Activated B cell treated with CpG ODN at 0.5 μM for 24 hours (primary cell): ENCODE measurements at regions of chrX and their contacts with region 1.

Region 1: GRCh38 chrX:135973548-135974278 is at the start of gene MMGT1:
- DNase-seq: peak; percentile 72
- ATAC-seq: peak; percentile 93
- H3K4me3 Mint-ChIP-seq: peak within 1 kb of the TSS; percentile 99
- H3K27ac Mint-ChIP-seq: peak within 1 kb of the TSS; percentile 97
- H3K4me1 Mint-ChIP-seq: peaks cover 27% of the 10 kb centered on the region
- H3K27me3 Mint-ChIP-seq: no peaks in the 10 kb centered on the region
- CTCF ChIP-seq: no peak
- total RNA-seq, gene MMGT1: 20.3 and 21.4 TPM in 2 replicates

Region 2: DNA sequence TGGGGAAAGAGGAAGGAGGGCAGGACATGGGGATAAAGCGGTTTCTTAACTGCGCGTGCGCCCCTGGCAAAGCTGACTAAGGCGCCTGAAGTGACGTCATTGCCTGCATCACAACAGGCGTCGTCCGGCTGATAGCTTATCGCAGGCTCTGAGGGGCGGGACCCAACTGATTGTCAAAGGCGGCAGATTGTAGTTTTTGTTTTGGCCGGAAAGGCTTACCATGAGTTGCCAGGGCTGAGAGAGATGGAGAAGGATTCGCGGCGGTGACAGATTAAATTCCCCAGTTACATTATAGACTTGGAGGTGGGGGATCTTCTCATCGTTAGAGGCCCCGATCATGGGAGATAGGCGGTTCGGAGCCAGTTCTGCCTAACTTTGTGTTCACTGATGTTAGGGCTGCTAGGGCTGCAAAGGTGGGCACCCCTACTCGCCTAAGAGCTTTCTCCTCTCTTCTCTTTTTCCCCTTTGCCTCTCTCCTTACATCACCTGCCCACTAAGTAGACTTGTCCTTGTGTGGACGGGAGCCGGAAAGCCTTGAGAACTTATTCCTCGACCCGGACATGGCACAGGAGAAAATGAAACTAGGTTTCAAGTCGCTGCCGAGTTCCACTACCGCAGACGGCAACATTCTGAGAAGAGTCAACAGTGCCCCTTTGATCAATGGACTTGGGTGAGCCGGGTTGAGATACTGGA is 1166.5 kb before region 1 on chrX:
- CTCF ChIA-PET with region 1: no interaction called
- POLR2A ChIA-PET with region 1: interaction called, 3 read pairs
- intact Hi-C with region 1: loop called (anchors 10 kb)
- DNase-seq: peak; percentile 63
- ATAC-seq: peak; percentile 91
- H3K4me3 Mint-ChIP-seq: peak overlapping the region; percentile 95
- H3K27ac Mint-ChIP-seq: peak overlapping the region; percentile 95
- H3K4me1 Mint-ChIP-seq: peaks cover 23% of the 10 kb centered on the region
- H3K27me3 Mint-ChIP-seq: no peaks in the 10 kb centered on the region
- CTCF ChIP-seq: no peak

Region 3: DNA sequence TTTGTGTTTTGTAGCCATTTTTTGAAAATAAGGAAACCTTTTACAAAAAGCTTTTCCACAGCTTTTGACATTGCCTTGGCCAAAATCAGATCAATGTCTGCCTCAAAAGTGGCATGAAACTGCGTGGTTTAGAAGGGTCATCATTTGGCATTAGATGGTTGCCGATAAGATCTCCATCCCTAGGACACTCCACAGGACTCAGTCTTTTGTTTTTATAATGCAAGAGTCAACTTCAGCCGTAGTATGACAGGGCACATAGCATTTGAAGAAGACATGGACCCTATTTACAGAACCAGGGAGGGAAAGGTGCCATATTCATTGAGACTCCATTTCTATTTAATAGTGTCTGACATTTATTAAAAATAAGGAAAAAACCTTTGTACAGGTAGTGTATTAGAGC is 923.1 kb before region 1 on chrX:
- CTCF ChIA-PET with region 1: no interaction called
- POLR2A ChIA-PET with region 1: no interaction called
- intact Hi-C with region 1: loop called (anchors 5 kb)
- DNase-seq: no peak
- ATAC-seq: no peak
- H3K4me3 Mint-ChIP-seq: peak overlapping the region; percentile 88
- H3K27ac Mint-ChIP-seq: no peak overlapping the region
- H3K4me1 Mint-ChIP-seq: peaks cover 15% of the 10 kb centered on the region
- H3K27me3 Mint-ChIP-seq: no peaks in the 10 kb centered on the region
- CTCF ChIP-seq: no peak

Region 4: DNA sequence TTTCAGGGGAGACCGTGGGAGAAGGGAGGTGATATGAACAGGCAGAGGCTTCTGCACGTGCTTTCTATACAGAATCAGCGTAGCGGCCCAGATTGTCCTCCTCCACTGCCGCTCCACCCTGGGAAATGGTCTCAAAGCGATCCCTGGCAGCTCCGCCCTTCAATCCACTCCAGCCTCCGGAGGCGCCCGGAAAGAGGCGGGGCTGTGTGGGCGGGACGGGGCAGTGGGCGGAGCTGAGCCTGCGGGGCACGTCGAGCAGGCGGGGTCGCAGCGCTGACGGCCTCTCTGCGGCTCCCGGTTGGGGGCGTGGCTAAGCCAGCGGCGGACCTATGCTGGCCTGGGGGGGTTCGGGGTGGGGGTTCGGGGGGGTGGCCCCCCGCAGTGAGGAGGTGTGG is 552.2 kb before region 1 on chrX:
- CTCF ChIA-PET with region 1: no interaction called
- POLR2A ChIA-PET with region 1: interaction called, 3 read pairs
- intact Hi-C with region 1: loop called (anchors 5 kb)
- DNase-seq: peak; percentile 76
- ATAC-seq: peak; percentile 95
- H3K4me3 Mint-ChIP-seq: peak overlapping the region; percentile 64
- H3K27ac Mint-ChIP-seq: no peak overlapping the region
- H3K4me1 Mint-ChIP-seq: peaks cover 4% of the 10 kb centered on the region
- H3K27me3 Mint-ChIP-seq: peaks cover 5% of the 10 kb centered on the region
- CTCF ChIP-seq: no peak

Region 5: GRCh38 chrX:135951291-135951690 is 22.4 kb before region 1 on chrX:
- CTCF ChIA-PET with region 1: no interaction called
- POLR2A ChIA-PET with region 1: no interaction called
- intact Hi-C with region 1: no loop called
- DNase-seq: no peak
- ATAC-seq: no peak
- H3K4me3 Mint-ChIP-seq: no peak overlapping the region
- H3K27ac Mint-ChIP-seq: no peak overlapping the region
- H3K4me1 Mint-ChIP-seq: no peaks in the 10 kb centered on the region
- H3K27me3 Mint-ChIP-seq: no peaks in the 10 kb centered on the region
- CTCF ChIP-seq: no peak

Region 6: GRCh38 chrX:135985141-135985972 is 11.6 kb after region 1 on chrX and contains the start of gene SLC9A6:
- CTCF ChIA-PET with region 1: interaction called, 3 read pairs
- POLR2A ChIA-PET with region 1: interaction called, 14 read pairs
- intact Hi-C with region 1: loop called (anchors 1 kb)
- DNase-seq: peak; percentile 64
- ATAC-seq: peak; percentile 93
- H3K4me3 Mint-ChIP-seq: peak within 1 kb of the TSS; percentile 91
- H3K27ac Mint-ChIP-seq: peak within 1 kb of the TSS; percentile 84
- H3K4me1 Mint-ChIP-seq: peaks cover 43% of the 10 kb centered on the region
- H3K27me3 Mint-ChIP-seq: no peaks in the 10 kb centered on the region
- CTCF ChIP-seq: no peak
- total RNA-seq, gene SLC9A6: 13.5 and 16.7 TPM in 2 replicates

Region 7: DNA sequence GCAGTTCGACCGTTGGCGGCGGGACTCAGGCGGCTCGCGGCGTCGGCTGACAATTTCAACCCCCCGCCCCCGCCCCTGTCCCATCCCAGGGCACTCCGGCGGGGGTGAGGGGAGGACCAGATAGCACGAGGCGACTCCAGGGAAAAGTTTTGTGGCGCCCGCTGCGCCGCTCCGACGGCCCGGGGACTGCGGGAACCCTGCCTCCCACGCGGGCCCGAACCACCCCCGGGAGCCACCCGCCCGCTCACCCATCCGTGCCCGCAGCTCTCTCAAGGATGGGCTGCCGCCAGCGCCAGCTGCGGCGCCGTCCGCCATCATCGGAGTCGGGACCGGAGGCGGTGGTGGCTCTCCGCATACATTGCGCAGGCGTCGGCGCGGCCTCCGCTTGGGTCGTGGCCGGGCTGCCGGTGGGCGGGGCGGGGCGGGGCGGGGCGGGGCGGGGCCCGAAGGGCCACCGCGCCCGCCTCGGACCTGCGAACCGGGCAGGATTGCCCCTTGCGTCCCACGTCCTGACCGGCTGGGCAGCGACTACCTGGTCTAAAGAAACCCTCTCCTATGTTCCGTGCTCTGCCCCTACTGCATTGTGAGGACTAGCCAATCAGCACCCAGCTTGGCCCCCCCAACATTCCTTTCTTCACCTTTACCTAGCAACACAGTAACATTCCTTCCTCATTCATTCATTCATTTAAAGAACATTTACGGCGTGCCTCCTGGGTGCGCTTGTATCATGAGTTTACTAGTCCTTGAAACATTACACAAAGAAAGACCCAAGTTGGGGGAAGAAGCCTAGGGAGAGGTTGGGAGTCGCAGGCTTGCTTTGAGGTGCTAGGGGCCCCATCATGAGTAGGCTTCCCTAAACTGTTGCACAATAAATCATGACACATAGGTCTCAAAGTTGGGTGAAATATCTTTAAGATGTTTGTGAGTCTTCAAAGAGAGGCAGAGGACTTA is 277.6 kb after region 1 on chrX and contains the start of gene MAP7D3:
- CTCF ChIA-PET with region 1: no interaction called
- POLR2A ChIA-PET with region 1: no interaction called
- intact Hi-C with region 1: loop called (anchors 2 kb)
- DNase-seq: peak; percentile 61
- ATAC-seq: peak; percentile 93
- H3K4me3 Mint-ChIP-seq: peak within 1 kb of the TSS; percentile 86
- H3K27ac Mint-ChIP-seq: peak within 1 kb of the TSS; percentile 81
- H3K4me1 Mint-ChIP-seq: peaks cover 6% of the 10 kb centered on the region
- H3K27me3 Mint-ChIP-seq: no peaks in the 10 kb centered on the region
- CTCF ChIP-seq: no peak
- total RNA-seq, gene MAP7D3: 11.2 and 12.2 TPM in 2 replicates

Region 8: DNA sequence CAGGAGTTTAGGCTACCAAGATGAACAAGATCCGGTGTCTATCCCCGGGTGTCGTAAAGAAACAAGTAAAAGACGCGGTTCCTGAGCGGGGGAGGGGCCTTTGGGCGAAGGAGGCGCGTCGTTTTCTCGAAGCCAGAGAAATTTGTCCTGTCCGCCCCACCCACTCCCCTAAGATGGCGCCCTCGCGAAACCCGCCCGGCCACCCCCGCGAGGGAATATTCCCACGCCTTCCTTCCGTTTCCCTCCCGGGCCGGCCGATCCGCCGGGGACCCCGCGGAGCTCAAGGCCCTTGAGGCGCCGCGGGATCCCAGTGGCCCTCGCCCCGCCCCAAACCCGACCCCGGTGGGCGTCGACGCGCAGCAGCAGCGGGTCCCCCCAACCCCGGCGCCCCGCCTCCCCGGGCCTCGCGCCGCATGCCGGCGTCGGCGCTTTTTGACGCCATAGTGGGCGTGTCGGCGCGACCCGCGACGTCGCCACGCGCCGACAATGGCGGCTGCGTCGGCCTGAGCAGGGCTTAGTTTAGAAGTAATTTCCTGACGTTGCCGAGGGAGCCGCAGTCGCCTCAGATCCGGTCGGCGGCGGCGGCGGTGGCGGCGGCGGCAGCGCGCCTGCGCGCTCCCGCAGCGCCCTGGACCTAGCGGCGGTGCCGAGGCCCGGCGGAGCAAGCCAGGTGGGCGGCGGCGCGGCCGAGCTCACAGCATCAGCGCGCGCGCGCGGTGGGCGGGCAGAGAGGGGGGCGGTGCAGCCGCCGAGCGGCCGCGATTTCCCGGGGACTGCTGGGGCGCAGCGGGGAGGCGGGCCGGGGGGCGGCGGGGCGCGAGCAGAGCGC is 523.3 kb after region 1 on chrX and contains the start of gene HTATSF1:
- CTCF ChIA-PET with region 1: no interaction called
- POLR2A ChIA-PET with region 1: no interaction called
- intact Hi-C with region 1: loop called (anchors 2 kb)
- DNase-seq: peak; percentile 79
- ATAC-seq: peak; percentile 81
- H3K4me3 Mint-ChIP-seq: peak within 1 kb of the TSS; percentile 89
- H3K27ac Mint-ChIP-seq: peak within 1 kb of the TSS; percentile 97
- H3K4me1 Mint-ChIP-seq: peaks cover 22% of the 10 kb centered on the region
- H3K27me3 Mint-ChIP-seq: no peaks in the 10 kb centered on the region
- CTCF ChIP-seq: no peak
- total RNA-seq, gene HTATSF1: 23.9 and 24.5 TPM in 2 replicates